ENCODE measurements at regions of chr5 and their contacts with region 1.

Region 1: DNA sequence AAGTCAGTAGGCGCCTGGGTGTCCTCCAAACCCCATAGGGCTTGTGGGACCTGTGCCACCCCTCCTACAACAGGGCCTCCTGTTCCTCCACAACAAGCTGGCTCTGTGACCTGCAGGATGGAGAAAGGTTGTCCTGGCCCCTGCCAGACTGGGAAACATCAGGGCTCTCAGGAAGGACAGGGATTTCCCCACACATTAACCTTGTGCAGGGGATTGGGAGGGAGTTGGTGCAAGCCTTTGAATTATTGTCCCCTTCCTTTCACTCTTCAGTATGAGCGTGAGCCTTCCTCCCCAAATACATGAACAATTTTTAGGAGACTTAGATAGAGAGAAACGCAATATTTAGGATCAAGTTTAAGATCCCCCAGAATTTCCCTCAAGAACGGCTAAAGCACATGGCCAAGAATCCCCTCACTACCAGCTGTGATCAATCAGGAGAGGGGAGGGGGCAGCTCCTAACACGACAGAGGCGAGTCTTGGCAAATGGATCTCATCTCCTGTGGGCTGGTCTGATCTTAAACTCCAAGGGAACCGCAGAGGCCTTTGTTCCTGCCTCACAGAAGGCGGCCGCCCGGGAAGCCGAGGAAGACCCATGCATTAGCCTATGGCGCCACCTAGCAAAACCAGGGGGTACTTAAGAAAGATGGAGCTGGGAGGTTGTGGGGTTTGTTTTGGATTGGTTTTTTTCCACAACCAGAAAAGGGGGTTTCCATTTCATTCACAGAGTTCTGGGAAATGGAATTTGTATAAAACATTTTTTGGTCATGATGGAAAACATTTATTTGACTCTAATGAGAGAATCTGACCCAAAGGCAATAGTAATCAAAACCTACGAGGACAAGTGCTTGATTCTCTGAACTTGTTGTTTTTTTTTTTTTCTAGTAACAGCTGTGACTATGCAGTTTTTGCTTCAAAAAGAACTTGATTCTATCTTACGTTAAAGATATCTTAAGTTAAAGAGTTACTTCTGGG is 36.1 kb upstream of the OSMR start:
- DNase-seq: peak; percentile 93
- H3K4me3 ChIP-seq: no peak overlapping the region
- H3K27ac ChIP-seq: peak overlapping the region in 3 of 4 donors; percentile 28 to 41 (median 37)
- H3K4me1 ChIP-seq: peaks cover 0 to 14% (median 8%) of the 10 kb centered on the region in 4 donors
- H3K27me3 ChIP-seq: no peaks in the 10 kb centered on the region
- CTCF ChIP-seq: peak; percentile 69 to 84 (median 77)
- EP300 ChIP-seq: no peak
- POLR2A ChIP-seq: no peak

Region 2: DNA sequence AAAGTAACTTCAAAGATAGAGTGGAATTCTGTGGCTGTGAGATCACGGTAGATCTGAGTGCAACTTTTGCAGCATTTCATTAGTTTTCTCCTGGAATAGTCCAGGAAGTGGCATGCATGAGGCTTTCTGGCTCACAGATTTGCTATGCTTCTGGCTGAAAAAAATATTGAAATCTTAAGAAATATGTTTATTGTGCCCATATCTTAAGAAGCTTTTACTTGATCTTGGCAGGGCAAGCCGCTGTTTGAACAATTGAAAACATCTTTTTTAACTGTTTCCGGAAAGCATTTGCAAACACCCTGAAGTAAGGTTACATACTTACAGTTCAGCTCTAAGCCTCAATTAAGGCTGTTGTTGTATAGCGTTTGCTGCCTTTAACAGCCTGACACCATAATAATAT is 834.1 kb before region 1 on chr5:
- intact Hi-C with region 1: no loop called
- DNase-seq: no peak
- H3K4me3 ChIP-seq: no peak overlapping the region
- H3K27ac ChIP-seq: no peak overlapping the region
- H3K4me1 ChIP-seq: peaks cover 0 to 14% (median 6%) of the 10 kb centered on the region in 4 donors
- H3K27me3 ChIP-seq: no peaks in the 10 kb centered on the region
- CTCF ChIP-seq: no peak
- EP300 ChIP-seq: no peak
- POLR2A ChIP-seq: no peak

Region 3: GRCh38 chr5:38382898-38383297 is 426.8 kb before region 1 on chr5:
- intact Hi-C with region 1: loop called (anchors 5 kb)
- DNase-seq: peak; percentile 71
- H3K4me3 ChIP-seq: no peak overlapping the region
- H3K27ac ChIP-seq: no peak overlapping the region
- H3K4me1 ChIP-seq: no peaks in the 10 kb centered on the region
- H3K27me3 ChIP-seq: no peaks in the 10 kb centered on the region
- CTCF ChIP-seq: peak; percentile 24 to 79 (median 62)
- EP300 ChIP-seq: no peak
- POLR2A ChIP-seq: no peak

Region 4: DNA sequence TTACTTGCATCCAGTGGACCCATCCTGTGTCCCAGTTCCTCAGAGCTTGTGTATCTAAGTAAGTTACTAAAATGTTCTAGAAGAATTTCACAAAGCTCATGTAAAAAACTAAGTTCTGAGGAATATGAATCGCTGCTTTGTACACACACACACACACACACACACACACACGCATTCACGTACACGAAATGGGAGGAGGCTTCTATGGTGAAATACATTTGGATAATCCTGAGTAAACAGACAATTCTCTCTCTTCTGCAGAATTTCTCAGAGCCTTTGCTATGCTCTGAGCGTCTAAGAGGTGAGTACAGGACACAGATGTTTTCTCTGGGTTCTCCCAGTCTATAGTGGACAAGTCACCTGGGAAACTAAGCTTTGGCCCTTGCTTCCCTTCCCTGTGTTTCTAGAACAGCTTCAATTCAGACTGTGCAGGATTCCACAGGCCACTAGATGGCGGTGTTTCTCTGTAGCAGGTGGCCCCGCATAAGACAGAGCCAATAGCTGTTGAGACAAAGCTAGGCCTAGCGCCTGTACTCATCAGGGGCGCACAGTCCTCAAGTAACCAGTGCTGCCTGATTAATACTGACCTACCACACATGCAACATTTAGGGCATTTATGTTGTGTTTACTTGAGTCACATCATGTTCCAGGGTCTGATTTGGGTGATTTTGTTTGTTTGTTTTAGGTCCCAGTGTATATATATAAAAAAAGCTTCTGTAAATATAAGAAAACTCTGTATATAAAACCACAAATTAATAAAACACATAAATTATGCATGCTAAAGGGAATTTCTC is 368.0 kb before region 1 on chr5:
- intact Hi-C with region 1: loop called (anchors 1 kb)
- DNase-seq: peak; percentile 94
- H3K4me3 ChIP-seq: no peak overlapping the region
- H3K27ac ChIP-seq: no peak overlapping the region
- H3K4me1 ChIP-seq: no peaks in the 10 kb centered on the region
- H3K27me3 ChIP-seq: no peaks in the 10 kb centered on the region
- CTCF ChIP-seq: peak; percentile 90 to 93 (median 91)
- EP300 ChIP-seq: no peak
- POLR2A ChIP-seq: no peak

Region 5: DNA sequence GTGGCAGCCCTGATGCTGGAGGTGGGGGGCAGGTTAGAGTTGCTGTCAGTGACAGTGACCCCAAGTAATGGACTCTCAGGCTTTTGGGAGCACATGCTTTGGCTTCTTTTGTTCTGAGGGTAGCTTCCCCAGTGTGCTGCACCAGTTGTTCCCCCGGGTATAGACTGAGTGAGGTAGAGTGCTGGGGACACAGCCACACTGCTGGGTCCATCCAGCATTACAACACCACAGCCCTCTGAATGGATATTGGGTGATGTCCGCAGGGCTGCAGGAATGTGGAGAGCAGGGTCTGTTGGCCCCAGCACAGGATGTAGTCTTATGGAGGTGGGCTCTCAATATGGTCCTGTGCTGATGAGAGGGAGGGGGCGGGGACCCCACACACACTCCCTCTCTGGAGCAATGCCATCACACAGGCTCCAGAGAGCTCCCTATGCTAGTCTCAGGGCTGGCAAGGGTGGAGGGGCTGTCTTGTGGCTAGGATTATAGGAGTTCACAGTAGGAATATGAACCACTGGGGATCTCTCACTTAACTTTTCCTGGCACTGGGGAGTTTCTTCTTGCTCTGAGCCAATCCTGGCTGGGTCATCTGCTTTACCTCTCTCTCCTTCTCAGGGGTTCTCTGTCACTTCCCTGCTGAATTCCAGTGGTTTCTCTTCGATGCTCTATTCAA is 56.8 kb after region 1 on chr5:
- intact Hi-C with region 1: no loop called
- DNase-seq: no peak
- H3K4me3 ChIP-seq: no peak overlapping the region
- H3K27ac ChIP-seq: no peak overlapping the region
- H3K4me1 ChIP-seq: peaks cover 0 to 31% (median 21%) of the 10 kb centered on the region in 4 donors
- H3K27me3 ChIP-seq: no peaks in the 10 kb centered on the region
- CTCF ChIP-seq: no peak
- EP300 ChIP-seq: no peak
- POLR2A ChIP-seq: no peak

Measured in sigmoid colon (tissue), 7 donors.